ENCODE measurements at regions of chr12 and their contacts with region 1.

Region 1: GRCh38 chr12:42237052-42237852 is 796 bp downstream of the YAF2 start:
- DNase-seq: peak; percentile 81 to 86
- H3K4me3 ChIP-seq: peak overlapping the region; percentile 14 to 74 (median 49)
- H3K27ac ChIP-seq: peak overlapping the region; percentile 81 to 95 (median 91)
- H3K4me1 ChIP-seq: peaks cover 46 to 47% of the 10 kb centered on the region in 2 donors
- H3K27me3 ChIP-seq: no peaks in the 10 kb centered on the region
- CTCF ChIP-seq: peak in 3 of 6 experiments; percentile 33 to 54 (median 38)
- POLR2A ChIP-seq: peak in 1 of 2 donors; percentile 68

Region 2: GRCh38 chr12:42144408-42145196 is 92.7 kb before region 1 on chr12 and contains the start of gene GXYLT1:
- intact Hi-C with region 1: loop called (anchors 10 kb)
- DNase-seq: peak; percentile 92 to 94
- H3K4me3 ChIP-seq: peak within 1 kb of the TSS; percentile 33 to 76 (median 66)
- H3K27ac ChIP-seq: peak within 1 kb of the TSS; percentile 40 to 84 (median 65)
- H3K4me1 ChIP-seq: peaks cover 14 to 15% of the 10 kb centered on the region in 2 donors
- H3K27me3 ChIP-seq: no peaks in the 10 kb centered on the region
- CTCF ChIP-seq: peak in 1 of 6 experiments; percentile 2
- POLR2A ChIP-seq: peak; percentile 34 to 97
- total RNA-seq, gene GXYLT1: 16.5 to 26.6 (median 20.6) TPM

Region 3: GRCh38 chr12:42261708-42262107 is 24.5 kb after region 1 on chr12:
- intact Hi-C with region 1: no loop called
- DNase-seq: no peak
- H3K4me3 ChIP-seq: no peak overlapping the region
- H3K27ac ChIP-seq: no peak overlapping the region
- H3K4me1 ChIP-seq: no peaks in the 10 kb centered on the region
- H3K27me3 ChIP-seq: no peaks in the 10 kb centered on the region
- CTCF ChIP-seq: no peak
- POLR2A ChIP-seq: no peak

Region 4: DNA sequence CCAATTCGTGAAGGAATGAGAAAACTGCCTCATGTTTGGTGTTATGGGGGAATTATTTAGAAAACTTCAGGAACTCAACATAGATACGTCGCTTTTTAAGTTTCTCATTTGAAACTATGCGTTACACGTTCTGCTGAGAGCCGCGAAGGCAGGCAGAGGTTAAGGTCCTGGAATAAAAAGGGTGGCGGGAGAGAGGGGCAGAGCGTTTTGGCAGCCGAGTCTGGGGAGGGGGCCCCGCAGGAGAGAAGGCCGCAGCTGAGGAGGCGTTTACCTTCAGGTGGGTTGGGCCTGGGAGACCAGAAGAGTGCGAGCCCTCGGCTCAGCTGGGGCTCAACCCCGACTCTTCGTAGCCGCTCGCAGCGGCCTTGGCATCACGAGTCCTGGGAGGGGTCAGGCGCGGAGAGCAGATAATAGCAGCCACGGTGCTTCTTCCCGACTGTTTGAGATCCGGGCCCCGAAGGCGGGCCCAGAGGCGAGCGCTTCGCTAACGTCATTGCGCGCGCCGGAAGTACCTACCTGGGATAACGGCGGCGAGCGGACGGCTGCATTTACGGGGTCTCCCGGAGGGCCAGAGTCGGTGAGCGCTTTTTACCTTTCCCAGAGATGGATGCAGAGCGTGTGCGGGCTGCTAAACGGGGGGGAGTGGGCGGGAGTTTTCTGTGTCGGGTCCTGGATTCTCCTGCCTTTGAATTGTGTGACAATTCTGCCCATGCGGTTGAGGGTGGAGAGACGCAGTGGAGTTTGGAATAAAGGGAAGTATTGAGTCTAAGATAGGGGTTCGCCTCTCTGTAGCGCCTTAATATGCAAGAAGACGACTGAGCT is 88.6 kb after region 1 on chr12 and contains the starts of genes PPHLN1 and ZCRB1:
- intact Hi-C with region 1: loop called (anchors 5 kb)
- DNase-seq: peak; percentile 81 to 84
- H3K4me3 ChIP-seq: peak within 1 kb of the TSS; percentile 58 to 87 (median 61)
- H3K27ac ChIP-seq: peak within 1 kb of the TSS; percentile 77 to 93 (median 86)
- H3K4me1 ChIP-seq: peaks cover 15 to 18% of the 10 kb centered on the region in 2 donors
- H3K27me3 ChIP-seq: no peaks in the 10 kb centered on the region
- CTCF ChIP-seq: no peak
- POLR2A ChIP-seq: peak in 1 of 2 donors; percentile 78
- total RNA-seq, gene PPHLN1: 57.9 to 91.3 (median 66.3) TPM
- total RNA-seq, gene ZCRB1: 30.7 to 42.3 (median 34.9) TPM